CD14-positive monocyte (primary cell): ENCODE measurements at regions of chr7 and their contacts with region 1.

Region 1: GRCh38 chr7:81846398-81846797 is 76.6 kb upstream of the HGF start:
- DNase-seq: peak; percentile 88 to 98 (median 95)
- H3K4me3 ChIP-seq: peak overlapping the region; percentile 53 to 92 (median 79)
- H3K4me3 Mint-ChIP-seq: peak overlapping the region; percentile 71 to 89
- H3K27ac ChIP-seq: peak overlapping the region; percentile 89 to 94
- H3K27ac Mint-ChIP-seq: peak overlapping the region; percentile 94 to 96 (median 96)
- H3K4me1 ChIP-seq: peaks cover 13 to 32% of the 10 kb centered on the region in 2 donors
- H3K4me1 Mint-ChIP-seq: peaks cover 31% of the 10 kb centered on the region
- H3K27me3 ChIP-seq: no peaks in the 10 kb centered on the region
- H3K27me3 Mint-ChIP-seq: no peaks in the 10 kb centered on the region
- CTCF ChIP-seq: no peak

Region 2: DNA sequence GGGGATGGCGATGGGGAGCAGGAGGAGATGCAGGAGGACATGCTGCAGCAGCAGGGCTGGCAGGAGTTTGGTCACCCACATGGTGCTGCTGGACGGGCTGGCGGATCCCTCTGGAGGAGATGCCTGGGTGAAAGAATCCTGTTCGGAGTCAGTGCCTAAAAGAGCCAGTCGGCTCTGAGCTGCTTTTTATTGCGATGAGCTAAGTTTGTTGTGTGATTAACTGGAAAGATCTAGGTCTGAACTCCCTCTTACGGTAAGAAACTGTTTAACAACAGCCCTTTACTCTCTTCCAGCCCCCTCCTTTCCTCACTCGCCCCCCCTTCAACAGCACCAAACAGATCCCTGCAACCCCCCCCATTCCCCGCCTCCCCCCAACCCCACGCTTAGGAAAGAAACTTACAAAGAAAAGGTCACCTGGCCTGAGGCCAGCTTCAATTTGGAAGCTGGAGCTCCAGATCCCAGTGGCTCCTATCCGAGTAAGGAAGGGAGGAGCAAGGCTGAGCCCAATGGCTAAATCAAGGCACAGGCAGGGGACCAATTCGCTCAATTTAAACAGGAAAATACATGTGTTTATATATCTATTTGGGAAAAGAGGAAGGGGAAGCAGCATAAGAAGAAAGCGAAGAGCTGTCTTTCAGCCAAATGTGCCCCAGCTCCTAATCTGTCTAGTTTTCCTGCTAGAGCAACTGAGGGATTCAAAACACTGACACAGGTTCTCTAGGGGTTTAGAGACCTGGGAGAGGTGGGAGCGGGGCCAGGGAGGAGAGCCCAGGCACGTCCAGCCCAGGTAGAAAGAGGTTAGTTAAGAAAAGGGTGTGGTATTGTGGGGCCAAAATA is 76.3 kb before region 1 on chr7 and contains the start of gene HGF:
- intact Hi-C with region 1: loop called (anchors 10 kb)
- DNase-seq: peak in 2 of 3 donors; percentile 31 to 47
- H3K4me3 ChIP-seq: peak within 1 kb of the TSS; percentile 46 to 100 (median 79)
- H3K4me3 Mint-ChIP-seq: peak within 1 kb of the TSS; percentile 88 to 95
- H3K27ac ChIP-seq: peak within 1 kb of the TSS; percentile 83 to 85
- H3K27ac Mint-ChIP-seq: peak within 1 kb of the TSS; percentile 89 to 98 (median 97)
- H3K4me1 ChIP-seq: peaks cover 53 to 63% of the 10 kb centered on the region in 2 donors
- H3K4me1 Mint-ChIP-seq: peaks cover 70% of the 10 kb centered on the region
- H3K27me3 ChIP-seq: no peaks in the 10 kb centered on the region
- H3K27me3 Mint-ChIP-seq: no peaks in the 10 kb centered on the region
- CTCF ChIP-seq: no peak
- polyA plus RNA-seq, gene HGF: 18.6 to 24.0 (median 18.9) TPM